ENCODE measurements at regions of chr19 and their contacts with region 1.

Region 1: GRCh38 chr19:18636183-18636968 is 452 bp upstream of the KLHL26 start:
- DNase-seq: peak; percentile 99
- H3K4me3 ChIP-seq: peak overlapping the region; percentile 72 to 97 (median 92)
- H3K27ac ChIP-seq: peak overlapping the region; percentile 86 to 94 (median 90)
- H3K4me1 ChIP-seq: peaks cover 0 to 26% (median 21%) of the 10 kb centered on the region in 4 donors
- H3K27me3 ChIP-seq: no peaks in the 10 kb centered on the region
- CTCF ChIP-seq: no peak
- EP300 ChIP-seq: no peak
- POLR2A ChIP-seq: no peak

Region 2: GRCh38 chr19:18683213-18683939 is 47.0 kb after region 1 on chr19 and contains the start of gene CRTC1:
- intact Hi-C with region 1: loop called (anchors 2 kb)
- DNase-seq: peak; percentile 94
- H3K4me3 ChIP-seq: peak within 1 kb of the TSS; percentile 56 to 60 (median 57)
- H3K27ac ChIP-seq: peak within 1 kb of the TSS; percentile 83 to 87 (median 84)
- H3K4me1 ChIP-seq: peaks cover 0 to 23% (median 20%) of the 10 kb centered on the region in 4 donors
- H3K27me3 ChIP-seq: no peaks in the 10 kb centered on the region
- CTCF ChIP-seq: no peak
- EP300 ChIP-seq: no peak
- POLR2A ChIP-seq: peak in 1 of 2 donors; percentile 28
- total RNA-seq, gene CRTC1: 2.5 to 7.2 (median 4.6) TPM

Region 3: DNA sequence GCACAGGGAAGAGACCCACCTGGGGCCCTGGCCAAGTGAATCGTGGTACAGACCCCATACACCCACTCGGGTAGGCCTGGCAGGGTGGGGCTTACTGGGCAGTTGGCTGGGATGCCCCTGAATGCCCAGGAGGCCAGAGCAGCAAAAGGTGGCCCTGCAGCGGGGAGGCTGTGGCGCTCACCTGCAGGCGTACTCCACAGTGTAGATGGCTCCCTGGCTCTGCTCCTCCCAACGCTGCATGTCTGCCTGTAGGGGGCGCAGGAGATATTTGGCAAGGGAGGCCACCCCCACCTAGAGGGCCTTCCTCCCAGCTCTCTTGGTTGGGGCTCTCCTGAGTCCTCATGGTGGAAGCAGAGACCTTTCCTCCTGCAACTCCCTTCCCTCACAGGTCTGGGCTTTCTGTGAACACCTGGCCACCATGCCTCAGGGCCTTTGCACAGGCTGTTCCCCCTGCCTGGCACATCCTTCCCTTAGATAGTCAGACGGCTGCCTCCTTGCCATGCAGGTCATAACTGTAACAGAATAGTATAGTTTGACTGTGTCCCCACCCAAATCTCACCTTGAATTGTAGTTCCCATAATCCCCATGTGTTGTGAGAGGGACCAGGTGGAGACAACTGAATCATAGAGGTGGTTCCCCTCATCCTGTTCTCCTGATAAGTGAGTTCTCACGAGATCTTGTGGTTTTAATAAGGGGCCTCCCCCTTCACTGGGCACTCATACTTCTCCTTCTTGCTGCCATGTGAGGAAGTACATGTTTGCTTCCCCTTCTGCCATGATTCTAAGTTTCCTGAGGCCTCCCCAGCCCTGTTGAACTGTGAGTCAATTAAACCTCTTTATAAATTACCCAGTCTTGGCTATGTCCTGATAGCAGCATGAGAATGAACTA is 549.7 kb after region 1 on chr19:
- intact Hi-C with region 1: loop called (anchors 5 kb)
- DNase-seq: no peak
- H3K4me3 ChIP-seq: no peak overlapping the region
- H3K27ac ChIP-seq: no peak overlapping the region
- H3K4me1 ChIP-seq: peaks cover 0 to 28% (median 23%) of the 10 kb centered on the region in 4 donors
- H3K27me3 ChIP-seq: no peaks in the 10 kb centered on the region
- CTCF ChIP-seq: peak in 1 of 4 experiments; percentile 29
- EP300 ChIP-seq: no peak
- POLR2A ChIP-seq: no peak

Measured in sigmoid colon (tissue), 7 donors.